ENCODE measurements at regions of chr17 and their contacts with region 1.

Region 1: DNA sequence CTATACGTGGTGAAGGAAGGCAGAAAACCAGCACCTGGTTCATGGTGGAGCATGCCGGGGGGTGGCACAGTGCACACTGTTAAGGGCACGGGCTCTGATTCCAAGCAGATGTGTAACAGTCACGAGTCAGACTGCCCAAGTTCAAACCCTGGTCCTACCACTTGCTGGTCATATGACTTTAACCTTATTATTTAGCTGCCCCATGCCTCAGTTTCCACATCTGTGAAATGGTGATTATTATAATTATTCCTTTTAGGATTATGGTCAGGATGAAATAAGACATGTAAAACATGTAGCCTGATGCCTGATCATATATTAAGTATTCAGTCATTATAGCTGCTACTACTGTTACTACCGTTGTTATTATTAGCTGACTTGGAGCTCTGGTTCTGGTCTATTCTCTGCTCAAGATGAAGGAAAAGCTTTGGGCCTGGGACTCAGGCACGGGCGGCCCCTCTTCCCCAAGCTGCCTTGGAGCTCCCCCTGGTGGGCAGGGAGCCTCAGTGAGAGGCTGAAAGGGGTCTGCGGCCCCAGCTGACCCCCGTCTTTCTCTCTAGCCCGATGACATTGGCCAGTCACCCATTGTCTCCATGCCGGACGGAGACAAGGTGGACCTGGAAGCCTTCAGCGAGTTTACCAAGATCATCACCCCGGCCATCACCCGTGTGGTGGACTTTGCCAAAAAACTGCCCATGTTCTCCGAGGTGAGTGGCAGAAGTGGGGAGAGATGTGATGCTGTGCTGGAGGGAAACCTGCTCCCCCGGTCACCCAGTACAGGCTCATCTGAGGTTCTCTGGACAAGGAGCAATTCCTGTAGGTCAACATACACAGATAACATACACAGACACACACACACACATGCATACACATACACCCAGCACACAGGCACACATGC is 14.0 kb downstream of the NR1D1 start:
- DNase-seq: peak; percentile 68 to 84
- H3K4me3 ChIP-seq: no peak overlapping the region
- H3K4me3 Mint-ChIP-seq: no peak overlapping the region
- H3K27ac Mint-ChIP-seq: no peak overlapping the region
- H3K4me1 ChIP-seq: peaks cover 3% of the 10 kb centered on the region; the same call in 1 of the 2 replicates
- H3K4me1 Mint-ChIP-seq: peaks cover 4% of the 10 kb centered on the region
- H3K27me3 ChIP-seq: no peaks in the 10 kb centered on the region
- H3K27me3 Mint-ChIP-seq: no peaks in the 10 kb centered on the region
- CTCF ChIP-seq: peak; percentile 87 to 91

Region 2: DNA sequence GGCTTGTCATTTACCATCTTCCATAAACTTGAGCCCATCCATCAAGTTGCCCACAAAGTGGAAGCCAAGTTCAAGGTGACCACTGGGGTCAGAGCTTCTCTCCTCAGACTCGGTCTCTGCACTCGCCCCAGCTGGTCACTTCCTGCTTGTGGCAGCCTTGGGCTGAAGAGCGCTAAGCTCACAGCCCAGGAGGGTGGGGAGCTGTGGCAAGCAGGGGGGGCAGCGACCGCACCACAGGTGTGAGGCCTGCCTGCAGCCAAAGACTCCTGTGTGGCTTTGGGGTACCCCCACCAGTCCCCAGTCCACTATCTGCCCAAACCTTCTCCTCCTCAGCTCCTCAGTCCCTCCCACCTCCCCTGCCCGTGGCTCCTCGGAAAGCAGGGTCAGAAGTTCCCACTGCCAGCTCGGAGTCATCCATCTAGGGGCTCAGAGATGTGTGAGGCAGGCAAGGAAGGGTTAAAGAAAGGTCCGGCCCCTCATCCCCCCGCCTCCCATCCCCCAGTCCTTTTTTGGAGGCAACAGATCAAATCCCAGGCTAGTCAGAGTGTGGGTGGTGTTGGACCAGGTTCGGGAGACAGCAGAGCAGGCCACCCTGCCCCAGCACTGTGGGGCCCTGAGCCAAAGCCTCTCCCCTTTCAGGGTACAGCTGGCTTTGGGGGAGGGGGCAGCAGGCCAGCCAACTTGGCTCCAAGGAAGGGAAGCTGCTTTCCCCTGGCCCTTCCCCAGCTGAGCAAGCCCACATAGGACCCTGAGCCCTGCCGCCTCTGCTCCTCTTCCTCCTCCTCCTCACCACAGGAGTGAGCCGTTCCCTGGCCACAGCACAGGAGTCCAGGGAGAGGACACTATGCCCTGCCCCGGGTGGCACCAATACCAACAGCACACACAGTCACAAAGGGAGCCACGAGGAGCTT is 67.9 kb before region 1 on chr17:
- CTCF ChIA-PET with region 1: interaction called, 14 read pairs
- POLR2A ChIA-PET with region 1: no interaction called
- intact Hi-C with region 1: loop called (anchors 1 kb)
- DNase-seq: no peak
- H3K4me3 ChIP-seq: no peak overlapping the region
- H3K4me3 Mint-ChIP-seq: no peak overlapping the region
- H3K27ac Mint-ChIP-seq: no peak overlapping the region
- H3K4me1 ChIP-seq: peaks cover 18% of the 10 kb centered on the region
- H3K4me1 Mint-ChIP-seq: no peaks in the 10 kb centered on the region
- H3K27me3 ChIP-seq: no peaks in the 10 kb centered on the region
- H3K27me3 Mint-ChIP-seq: no peaks in the 10 kb centered on the region
- CTCF ChIP-seq: no peak

Region 3: GRCh38 chr17:40026816-40027613 is 59.4 kb before region 1 on chr17:
- CTCF ChIA-PET with region 1: interaction called, 3 read pairs
- POLR2A ChIA-PET with region 1: no interaction called
- intact Hi-C with region 1: loop called (anchors 2 kb)
- DNase-seq: peak; percentile 77 to 82
- H3K4me3 ChIP-seq: no peak overlapping the region
- H3K4me3 Mint-ChIP-seq: no peak overlapping the region
- H3K27ac Mint-ChIP-seq: no peak overlapping the region
- H3K4me1 ChIP-seq: no peaks in the 10 kb centered on the region
- H3K4me1 Mint-ChIP-seq: peaks cover 6% of the 10 kb centered on the region
- H3K27me3 ChIP-seq: no peaks in the 10 kb centered on the region
- H3K27me3 Mint-ChIP-seq: no peaks in the 10 kb centered on the region
- CTCF ChIP-seq: peak; percentile 94 to 95

Region 4: DNA sequence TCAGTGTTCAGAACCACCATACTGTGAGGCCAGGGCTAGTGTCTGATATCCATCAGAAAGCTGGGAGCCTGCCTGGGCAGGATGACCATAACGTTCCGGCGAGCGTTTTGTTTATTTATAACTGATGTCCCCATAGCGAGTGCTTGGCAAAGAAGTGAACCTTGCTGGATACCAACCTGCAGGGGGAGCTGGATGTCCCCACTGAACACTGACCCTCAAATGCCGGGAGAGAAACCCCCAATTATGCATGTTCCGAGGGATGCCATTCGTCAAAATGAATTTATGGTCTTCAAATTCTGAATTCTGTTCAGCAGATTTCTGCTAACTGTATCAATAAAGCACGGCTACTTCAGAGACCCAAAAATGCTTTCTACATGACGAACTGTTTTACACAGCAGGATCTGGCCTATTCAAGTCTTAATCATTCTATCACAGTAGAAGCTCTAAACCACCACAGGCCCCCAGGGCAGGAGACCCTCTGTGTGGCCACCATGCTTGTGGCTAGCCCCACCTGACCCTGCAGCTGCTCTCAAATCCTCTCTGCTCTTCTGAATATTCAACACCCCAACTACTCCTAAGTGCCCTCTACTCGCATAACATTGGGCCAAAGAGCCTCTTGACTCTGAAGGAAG is 47.4 kb before region 1 on chr17:
- CTCF ChIA-PET with region 1: interaction called, 10 read pairs
- POLR2A ChIA-PET with region 1: no interaction called
- intact Hi-C with region 1: loop called (anchors 1 kb)
- DNase-seq: peak in 1 of 2 experiments; percentile 53
- H3K4me3 ChIP-seq: no peak overlapping the region
- H3K4me3 Mint-ChIP-seq: no peak overlapping the region
- H3K27ac Mint-ChIP-seq: no peak overlapping the region
- H3K4me1 ChIP-seq: no peaks in the 10 kb centered on the region
- H3K4me1 Mint-ChIP-seq: no peaks in the 10 kb centered on the region
- H3K27me3 ChIP-seq: no peaks in the 10 kb centered on the region
- H3K27me3 Mint-ChIP-seq: no peaks in the 10 kb centered on the region
- CTCF ChIP-seq: peak; percentile 44 to 56

Region 5: GRCh38 chr17:40062329-40063186 is 23.8 kb before region 1 on chr17 and contains the start of gene THRA:
- CTCF ChIA-PET with region 1: interaction called, 7 read pairs
- POLR2A ChIA-PET with region 1: no interaction called
- intact Hi-C with region 1: loop called (anchors 1 kb)
- DNase-seq: peak in 1 of 2 experiments; percentile 83
- H3K4me3 ChIP-seq: peak within 1 kb of the TSS; percentile 99
- H3K4me3 Mint-ChIP-seq: peak within 1 kb of the TSS; percentile 78
- H3K27ac Mint-ChIP-seq: peak within 1 kb of the TSS; percentile 23
- H3K4me1 ChIP-seq: peaks cover 26% of the 10 kb centered on the region
- H3K4me1 Mint-ChIP-seq: peaks cover 34% of the 10 kb centered on the region
- H3K27me3 ChIP-seq: no peaks in the 10 kb centered on the region
- H3K27me3 Mint-ChIP-seq: no peaks in the 10 kb centered on the region
- CTCF ChIP-seq: no peak
- total RNA-seq, gene THRA: 27.3 and 29.3 TPM in 2 replicates

Region 6: GRCh38 chr17:40075201-40075941 is 11.0 kb before region 1 on chr17:
- CTCF ChIA-PET with region 1: interaction called, 18 read pairs
- POLR2A ChIA-PET with region 1: no interaction called
- intact Hi-C with region 1: no loop called
- DNase-seq: peak; percentile 78 to 81
- H3K4me3 ChIP-seq: no peak overlapping the region
- H3K4me3 Mint-ChIP-seq: no peak overlapping the region
- H3K27ac Mint-ChIP-seq: peak overlapping the region; percentile 47
- H3K4me1 ChIP-seq: peaks cover 49% of the 10 kb centered on the region
- H3K4me1 Mint-ChIP-seq: peaks cover 27% of the 10 kb centered on the region
- H3K27me3 ChIP-seq: no peaks in the 10 kb centered on the region
- H3K27me3 Mint-ChIP-seq: no peaks in the 10 kb centered on the region
- CTCF ChIP-seq: peak; percentile 92 to 94

Region 7: DNA sequence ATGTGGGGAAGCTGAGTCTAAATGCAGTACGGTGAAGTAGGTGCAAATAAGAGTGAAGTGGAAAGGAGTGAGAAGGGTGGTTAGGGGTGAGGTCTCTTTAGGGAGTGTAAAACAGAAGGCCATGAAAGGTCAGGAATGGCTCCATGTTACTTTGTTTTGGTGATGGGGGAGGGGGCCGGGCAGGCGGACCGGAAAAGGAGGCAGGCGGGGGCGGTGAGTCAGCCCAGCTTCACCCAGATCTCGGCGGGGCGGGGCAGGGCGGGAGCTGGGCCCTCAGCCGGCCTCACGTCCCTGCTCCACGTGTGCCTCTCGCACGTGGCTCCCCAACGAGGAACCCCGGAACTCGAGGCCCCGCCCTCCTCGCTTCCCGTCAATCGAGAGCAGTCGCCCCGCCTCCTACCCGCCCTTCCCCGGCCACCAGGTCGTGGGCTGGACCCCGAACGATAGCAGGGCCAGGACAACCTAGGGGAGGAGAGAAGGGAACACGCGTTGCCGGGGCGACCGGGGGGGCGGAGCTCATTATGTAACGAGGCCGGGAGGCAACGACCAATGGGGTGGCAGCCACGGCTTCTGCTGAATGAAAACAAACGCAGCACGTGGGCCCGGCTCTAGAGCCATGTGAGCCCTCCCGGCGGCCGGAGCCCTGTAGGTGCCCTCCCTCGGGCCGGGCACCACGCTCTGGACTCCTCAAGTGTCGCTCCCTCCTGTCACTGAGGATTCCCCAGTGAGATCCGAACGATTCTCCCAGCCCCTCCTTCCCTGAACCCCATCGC is 12.6 kb after region 1 on chr17:
- CTCF ChIA-PET with region 1: interaction called, 12 read pairs
- POLR2A ChIA-PET with region 1: interaction called, 5 read pairs
- intact Hi-C with region 1: no loop called
- DNase-seq: peak; percentile 100
- H3K4me3 ChIP-seq: peak overlapping the region; percentile 59
- H3K4me3 Mint-ChIP-seq: peak overlapping the region; percentile 94
- H3K27ac Mint-ChIP-seq: peak overlapping the region; percentile 92
- H3K4me1 ChIP-seq: peaks cover 37% of the 10 kb centered on the region
- H3K4me1 Mint-ChIP-seq: peaks cover 26% of the 10 kb centered on the region
- H3K27me3 ChIP-seq: no peaks in the 10 kb centered on the region
- H3K27me3 Mint-ChIP-seq: no peaks in the 10 kb centered on the region
- CTCF ChIP-seq: no peak

Region 8: DNA sequence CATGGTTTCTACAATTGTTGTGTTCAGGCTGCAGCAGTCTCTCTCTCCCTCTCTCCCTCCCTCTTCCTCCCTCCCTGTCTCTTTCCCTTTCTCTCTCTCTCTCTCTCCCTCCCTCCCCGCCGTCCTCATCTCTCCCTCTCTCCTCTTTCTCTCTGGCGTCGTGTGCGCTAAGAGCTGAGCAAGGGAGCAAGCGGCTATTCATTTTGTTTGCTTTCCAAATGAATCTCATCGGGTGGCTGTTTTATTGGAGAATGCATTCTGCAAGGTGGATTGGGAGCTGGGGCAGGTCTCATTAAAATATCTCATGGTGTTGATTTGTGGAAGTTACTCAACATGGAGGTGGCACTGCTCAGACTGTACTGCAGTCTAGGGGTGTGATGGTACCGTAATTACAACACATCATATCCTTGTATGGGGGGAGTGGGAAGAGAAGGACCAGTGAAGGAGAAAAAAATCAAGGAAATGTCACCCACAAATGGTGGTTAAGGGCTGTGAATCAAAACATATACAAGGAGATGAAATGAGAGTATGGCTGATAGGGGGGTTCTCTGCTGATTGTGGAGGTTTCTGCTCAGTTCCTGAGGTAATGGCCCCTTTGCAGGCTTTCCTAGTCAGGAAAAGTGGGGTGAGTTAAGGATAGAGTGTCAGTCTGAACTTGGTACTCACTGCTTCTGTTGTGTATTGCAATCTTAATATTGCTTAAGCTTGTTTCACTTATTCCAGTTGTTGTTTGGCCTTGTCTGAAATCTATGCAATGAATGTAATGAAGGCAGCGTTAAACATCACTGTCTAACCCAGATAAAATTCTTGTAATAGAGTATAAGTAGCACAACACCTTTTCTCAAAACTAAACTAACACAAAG is 38.1 kb after region 1 on chr17:
- CTCF ChIA-PET with region 1: no interaction called
- POLR2A ChIA-PET with region 1: no interaction called
- intact Hi-C with region 1: no loop called
- DNase-seq: no peak
- H3K4me3 ChIP-seq: peak overlapping the region; percentile 78
- H3K4me3 Mint-ChIP-seq: peak overlapping the region; percentile 97
- H3K27ac Mint-ChIP-seq: no peak overlapping the region
- H3K4me1 ChIP-seq: peaks cover 19% of the 10 kb centered on the region
- H3K4me1 Mint-ChIP-seq: peaks cover 21% of the 10 kb centered on the region
- H3K27me3 ChIP-seq: no peaks in the 10 kb centered on the region
- H3K27me3 Mint-ChIP-seq: no peaks in the 10 kb centered on the region
- CTCF ChIP-seq: no peak

Region 9: GRCh38 chr17:40191237-40192208 is 105.1 kb after region 1 on chr17:
- CTCF ChIA-PET with region 1: no interaction called
- POLR2A ChIA-PET with region 1: no interaction called
- intact Hi-C with region 1: no loop called
- DNase-seq: peak in 1 of 2 experiments; percentile 50
- H3K4me3 ChIP-seq: no peak overlapping the region
- H3K4me3 Mint-ChIP-seq: peak overlapping the region; percentile 32
- H3K27ac Mint-ChIP-seq: no peak overlapping the region
- H3K4me1 ChIP-seq: no peaks in the 10 kb centered on the region
- H3K4me1 Mint-ChIP-seq: no peaks in the 10 kb centered on the region
- H3K27me3 ChIP-seq: no peaks in the 10 kb centered on the region
- H3K27me3 Mint-ChIP-seq: no peaks in the 10 kb centered on the region
- CTCF ChIP-seq: peak; percentile 23 to 30